BJ (cell line): ENCODE measurements at regions of chr12 and their contacts with region 1.

Region 1: GRCh38 chr12:108803428-108804105 is 53.8 kb downstream of the SSH1 start:
- DNase-seq: peak; percentile 73
- H3K4me3 ChIP-seq: no peak overlapping the region
- H3K27me3 ChIP-seq: no peaks in the 10 kb centered on the region
- CTCF ChIP-seq: peak; percentile 91

Region 2: GRCh38 chr12:108570743-108571608 is 232.6 kb before region 1 on chr12:
- CTCF ChIA-PET with region 1: interaction called, 13 read pairs
- POLR2A ChIA-PET with region 1: no interaction called
- DNase-seq: no peak
- H3K4me3 ChIP-seq: no peak overlapping the region
- H3K27me3 ChIP-seq: no peaks in the 10 kb centered on the region; the same call in 1 of the 2 replicates
- CTCF ChIP-seq: peak; percentile 49

Region 3: GRCh38 chr12:108629824-108630476 is 173.6 kb before region 1 on chr12:
- CTCF ChIA-PET with region 1: interaction called, 11 read pairs
- POLR2A ChIA-PET with region 1: no interaction called
- DNase-seq: peak; percentile 53
- H3K4me3 ChIP-seq: no peak overlapping the region
- H3K27me3 ChIP-seq: no peaks in the 10 kb centered on the region
- CTCF ChIP-seq: no peak

Region 4: DNA sequence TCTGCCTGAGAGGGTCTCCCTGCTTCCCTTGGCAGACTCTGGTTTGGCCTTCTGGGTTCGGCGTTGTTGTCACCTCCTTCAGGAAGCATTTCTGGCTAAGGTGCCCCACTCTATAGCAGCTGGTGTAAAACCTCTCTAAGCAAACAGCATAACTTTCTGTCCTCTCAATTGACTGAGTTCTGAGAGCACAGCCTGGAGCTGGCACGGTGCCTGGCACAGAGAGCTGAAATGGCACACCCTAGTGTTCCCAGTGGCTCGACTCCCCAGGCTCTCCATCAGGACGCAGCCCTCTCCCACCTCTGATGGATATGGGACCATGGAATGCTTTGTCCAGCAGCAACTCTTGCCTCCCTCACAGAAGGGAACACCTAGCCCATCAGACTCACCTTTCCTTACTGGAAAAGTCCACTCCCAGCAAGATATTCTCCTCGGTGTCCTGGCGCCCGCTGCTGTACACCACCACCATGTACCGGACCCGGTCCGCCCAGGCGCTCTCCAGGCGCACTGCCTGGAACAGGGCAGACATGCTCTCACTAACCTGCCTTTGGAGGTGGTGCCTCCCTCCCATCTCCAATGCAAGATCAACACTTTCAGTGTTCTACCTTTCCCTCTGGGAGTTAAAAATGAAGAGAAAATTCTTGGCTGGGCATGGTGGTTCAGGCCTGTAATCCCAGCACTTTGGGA is 13.2 kb after region 1 on chr12:
- CTCF ChIA-PET with region 1: interaction called, 21 read pairs
- POLR2A ChIA-PET with region 1: no interaction called
- DNase-seq: no peak
- H3K4me3 ChIP-seq: no peak overlapping the region
- H3K27me3 ChIP-seq: no peaks in the 10 kb centered on the region
- CTCF ChIP-seq: no peak

Region 5: GRCh38 chr12:108838194-108839017 is 34.8 kb after region 1 on chr12:
- CTCF ChIA-PET with region 1: interaction called, 20 read pairs
- POLR2A ChIA-PET with region 1: interaction called, 5 read pairs
- DNase-seq: peak; percentile 100
- H3K4me3 ChIP-seq: no peak overlapping the region
- H3K27me3 ChIP-seq: no peaks in the 10 kb centered on the region
- CTCF ChIP-seq: no peak